Activated CD4-positive, alpha-beta T cell treated with anti-CD3 and anti-CD28 coated beads for 36 hours (primary cell): ENCODE measurements at regions of chr5 and their contacts with region 1.

Region 1: GRCh38 chr5:148708854-148709253 is 54.5 kb upstream of the HTR4 start:
- DNase-seq: peak; percentile 57
- ATAC-seq: peak; percentile 98
- H3K4me3 Mint-ChIP-seq: no peak overlapping the region
- H3K27ac Mint-ChIP-seq: no peak overlapping the region
- H3K4me1 Mint-ChIP-seq: peaks cover 22% of the 10 kb centered on the region
- H3K27me3 Mint-ChIP-seq: peaks cover 26% of the 10 kb centered on the region

Region 2: DNA sequence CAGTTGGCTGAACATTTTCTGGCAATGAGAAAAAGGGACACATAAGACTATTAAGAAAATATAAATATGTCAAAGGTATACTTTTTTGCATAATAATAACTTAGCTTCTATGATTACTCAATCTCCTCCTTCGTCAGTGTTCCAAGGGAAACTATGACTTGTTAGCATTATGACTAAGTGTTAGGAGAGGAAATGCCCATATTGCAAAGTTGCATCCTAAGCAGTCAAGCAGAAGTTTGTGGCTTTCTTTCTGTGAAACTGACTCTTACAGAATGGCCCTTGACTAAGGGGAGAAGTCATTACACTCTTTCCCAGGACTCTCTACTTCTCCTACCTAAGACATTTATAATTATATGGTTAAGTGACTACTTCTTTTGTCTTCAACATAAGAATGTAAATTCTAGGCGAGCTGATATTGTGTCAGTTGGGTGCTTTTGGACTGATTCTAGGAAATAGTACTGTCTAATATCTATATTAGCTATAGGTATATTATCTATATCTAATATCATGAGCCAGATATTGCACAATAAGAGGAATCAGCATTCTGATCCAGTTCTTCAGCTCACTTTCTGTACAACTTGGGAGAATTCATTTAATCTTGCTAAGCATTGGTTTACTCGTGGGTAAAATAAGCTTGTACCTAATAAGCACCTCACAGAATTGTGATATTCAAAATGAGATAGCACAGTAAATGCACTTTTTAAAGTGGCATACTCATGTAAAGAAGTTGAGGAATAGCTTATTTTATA is 522.4 kb before region 1 on chr5:
- CTCF ChIA-PET with region 1: no interaction called
- POLR2A ChIA-PET with region 1: no interaction called
- intact Hi-C with region 1: loop called (anchors 1 to 2 kb)
- DNase-seq: no peak
- ATAC-seq: peak; percentile 99
- H3K4me3 Mint-ChIP-seq: no peak overlapping the region
- H3K27ac Mint-ChIP-seq: no peak overlapping the region
- H3K4me1 Mint-ChIP-seq: peaks cover 11% of the 10 kb centered on the region
- H3K27me3 Mint-ChIP-seq: peaks cover 15% of the 10 kb centered on the region

Region 3: DNA sequence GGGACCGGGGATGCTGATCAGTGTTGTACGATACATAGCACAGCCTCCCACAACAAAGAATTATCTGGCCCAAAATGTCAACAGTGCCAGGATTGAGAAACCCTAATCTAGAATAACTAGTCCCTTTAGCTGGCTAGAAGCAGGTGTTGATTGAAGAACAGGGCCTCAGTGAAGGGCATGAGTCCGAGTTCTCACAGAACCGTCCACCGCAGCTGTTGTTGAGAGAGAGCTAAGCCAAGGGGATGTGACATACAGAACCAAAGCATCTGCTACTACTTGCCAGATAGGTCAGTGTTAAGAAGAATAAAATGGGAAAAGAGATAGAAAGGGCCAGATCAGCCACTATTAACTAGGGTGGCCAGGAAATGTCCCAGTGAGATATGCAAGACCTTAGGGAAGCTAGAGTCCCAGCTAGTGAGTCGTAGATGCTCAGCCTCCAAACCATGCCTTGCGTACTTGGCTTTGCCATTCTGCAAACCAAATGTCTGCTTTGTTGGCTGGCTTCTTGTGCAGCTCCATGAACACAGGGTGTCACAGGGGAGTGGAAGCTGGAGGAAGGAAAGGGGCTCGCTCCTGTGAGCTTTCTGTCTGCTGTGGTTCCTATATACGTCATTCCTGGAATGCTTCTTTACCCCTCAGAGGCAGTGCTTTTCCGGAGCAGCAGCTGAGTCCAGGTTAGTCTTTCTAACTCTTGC is 256.2 kb before region 1 on chr5:
- CTCF ChIA-PET with region 1: no interaction called
- POLR2A ChIA-PET with region 1: no interaction called
- intact Hi-C with region 1: no loop called
- DNase-seq: no peak
- ATAC-seq: no peak
- H3K4me3 Mint-ChIP-seq: no peak overlapping the region
- H3K27ac Mint-ChIP-seq: no peak overlapping the region
- H3K4me1 Mint-ChIP-seq: no peaks in the 10 kb centered on the region
- H3K27me3 Mint-ChIP-seq: peaks cover 14% of the 10 kb centered on the region

Region 4: GRCh38 chr5:148620696-148621095 is 88.2 kb before region 1 on chr5:
- CTCF ChIA-PET with region 1: no interaction called
- POLR2A ChIA-PET with region 1: no interaction called
- intact Hi-C with region 1: loop called (anchors 1 to 5 kb)
- DNase-seq: peak; percentile 35
- ATAC-seq: peak; percentile 94
- H3K4me3 Mint-ChIP-seq: no peak overlapping the region
- H3K27ac Mint-ChIP-seq: no peak overlapping the region
- H3K4me1 Mint-ChIP-seq: peaks cover 32% of the 10 kb centered on the region
- H3K27me3 Mint-ChIP-seq: peaks cover 12% of the 10 kb centered on the region

Region 5: GRCh38 chr5:148791334-148791667 is 82.4 kb after region 1 on chr5:
- CTCF ChIA-PET with region 1: no interaction called
- POLR2A ChIA-PET with region 1: no interaction called
- intact Hi-C with region 1: loop called (anchors 1 to 5 kb)
- DNase-seq: peak; percentile 68
- ATAC-seq: peak; percentile 94
- H3K4me3 Mint-ChIP-seq: no peak overlapping the region
- H3K27ac Mint-ChIP-seq: no peak overlapping the region
- H3K4me1 Mint-ChIP-seq: peaks cover 23% of the 10 kb centered on the region
- H3K27me3 Mint-ChIP-seq: peaks cover 45% of the 10 kb centered on the region

Region 6: GRCh38 chr5:148805326-148806290 is 96.8 kb after region 1 on chr5:
- CTCF ChIA-PET with region 1: no interaction called
- POLR2A ChIA-PET with region 1: no interaction called
- intact Hi-C with region 1: loop called in 1 of 2 experiments (anchors 2 kb)
- DNase-seq: peak; percentile 62
- ATAC-seq: peak; percentile 60
- H3K4me3 Mint-ChIP-seq: no peak overlapping the region
- H3K27ac Mint-ChIP-seq: peak overlapping the region; percentile 21
- H3K4me1 Mint-ChIP-seq: peaks cover 40% of the 10 kb centered on the region
- H3K27me3 Mint-ChIP-seq: peaks cover 17% of the 10 kb centered on the region

Region 7: DNA sequence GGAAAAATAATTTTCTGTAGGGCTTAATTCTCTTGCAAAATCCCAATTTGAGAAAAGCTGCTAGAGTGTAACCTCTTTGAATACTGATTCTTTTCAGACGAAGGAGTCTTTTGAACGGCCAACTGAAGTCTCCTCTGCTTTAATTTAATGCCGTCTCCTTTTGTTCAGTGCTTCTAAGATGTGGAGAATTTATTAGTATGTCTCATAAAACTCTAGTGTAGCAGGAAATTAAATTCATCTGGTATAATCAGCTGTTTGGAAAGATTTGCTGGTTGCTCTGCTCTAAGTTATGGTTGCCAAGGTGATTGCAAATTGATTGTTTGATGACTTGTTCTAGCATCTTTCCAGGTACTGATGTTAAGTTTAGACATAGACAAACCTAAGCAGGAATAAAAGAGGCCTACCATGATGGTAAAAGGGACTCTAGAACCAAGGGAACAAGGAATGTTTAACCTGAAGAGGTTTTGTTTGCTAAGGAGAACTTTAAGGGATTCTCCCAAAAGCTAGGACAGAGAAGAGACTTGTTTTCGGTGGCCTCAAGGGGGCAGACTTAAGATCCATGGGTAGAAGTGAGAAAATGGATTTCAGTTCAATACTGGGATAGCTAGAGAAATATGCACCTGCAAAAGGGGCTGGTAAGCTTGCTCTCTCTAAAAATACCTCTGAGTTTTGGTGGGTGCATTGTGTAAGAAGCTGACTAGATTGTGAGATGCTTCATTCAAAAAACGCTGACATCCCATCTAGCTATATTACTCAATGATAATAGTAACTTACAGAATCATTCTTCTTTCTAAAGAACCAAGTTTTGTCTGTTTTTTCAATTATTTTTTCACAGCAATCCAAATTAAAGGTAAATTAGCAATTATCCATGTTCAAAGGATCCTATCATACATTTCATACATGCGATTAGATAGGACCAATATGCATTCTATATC is 111.9 kb after region 1 on chr5:
- CTCF ChIA-PET with region 1: no interaction called
- POLR2A ChIA-PET with region 1: no interaction called
- intact Hi-C with region 1: no loop called
- DNase-seq: peak; percentile 32
- ATAC-seq: peak; percentile 30
- H3K4me3 Mint-ChIP-seq: no peak overlapping the region
- H3K27ac Mint-ChIP-seq: no peak overlapping the region
- H3K4me1 Mint-ChIP-seq: peaks cover 3% of the 10 kb centered on the region
- H3K27me3 Mint-ChIP-seq: peaks cover 15% of the 10 kb centered on the region

Region 8: DNA sequence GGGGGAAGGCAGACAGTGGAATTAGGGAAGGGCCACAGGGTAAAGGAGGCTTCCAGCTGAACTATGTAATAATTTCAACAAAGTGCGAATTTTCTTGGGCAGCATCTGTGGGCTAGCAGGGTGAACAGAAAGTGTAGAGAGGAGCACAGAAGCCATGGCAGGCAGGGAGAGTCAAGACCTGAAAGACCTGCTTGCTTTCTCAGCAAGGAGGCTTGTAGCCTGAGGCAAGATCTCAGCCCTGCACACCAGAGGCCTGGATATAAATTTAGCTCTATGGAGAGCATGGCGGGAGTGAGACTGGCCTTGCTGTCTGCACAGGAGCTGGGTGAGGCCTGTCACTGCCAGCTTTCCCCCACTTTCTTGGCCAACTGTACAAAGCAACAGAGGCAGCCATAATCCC is 386.1 kb after region 1 on chr5:
- CTCF ChIA-PET with region 1: no interaction called
- POLR2A ChIA-PET with region 1: no interaction called
- intact Hi-C with region 1: no loop called
- DNase-seq: no peak
- ATAC-seq: no peak
- H3K4me3 Mint-ChIP-seq: no peak overlapping the region
- H3K27ac Mint-ChIP-seq: no peak overlapping the region
- H3K4me1 Mint-ChIP-seq: no peaks in the 10 kb centered on the region
- H3K27me3 Mint-ChIP-seq: peaks cover 6% of the 10 kb centered on the region

Region 9: GRCh38 chr5:149108651-149109280 is 399.9 kb after region 1 on chr5:
- CTCF ChIA-PET with region 1: no interaction called
- POLR2A ChIA-PET with region 1: no interaction called
- intact Hi-C with region 1: no loop called
- DNase-seq: no peak
- ATAC-seq: no peak
- H3K4me3 Mint-ChIP-seq: no peak overlapping the region
- H3K27ac Mint-ChIP-seq: no peak overlapping the region
- H3K4me1 Mint-ChIP-seq: no peaks in the 10 kb centered on the region
- H3K27me3 Mint-ChIP-seq: no peaks in the 10 kb centered on the region

Region 10: GRCh38 chr5:149240354-149240998 is 531.6 kb after region 1 on chr5:
- CTCF ChIA-PET with region 1: no interaction called
- POLR2A ChIA-PET with region 1: no interaction called
- intact Hi-C with region 1: loop called in 1 of 2 experiments (anchors 1 kb)
- DNase-seq: peak; percentile 91
- ATAC-seq: peak; percentile 95
- H3K4me3 Mint-ChIP-seq: peak overlapping the region; percentile 34
- H3K27ac Mint-ChIP-seq: peak overlapping the region; percentile 91
- H3K4me1 Mint-ChIP-seq: peaks cover 32% of the 10 kb centered on the region
- H3K27me3 Mint-ChIP-seq: no peaks in the 10 kb centered on the region